SK-N-SH (cell line): ENCODE measurements at regions of chr13 and their contacts with region 1.

Region 1: DNA sequence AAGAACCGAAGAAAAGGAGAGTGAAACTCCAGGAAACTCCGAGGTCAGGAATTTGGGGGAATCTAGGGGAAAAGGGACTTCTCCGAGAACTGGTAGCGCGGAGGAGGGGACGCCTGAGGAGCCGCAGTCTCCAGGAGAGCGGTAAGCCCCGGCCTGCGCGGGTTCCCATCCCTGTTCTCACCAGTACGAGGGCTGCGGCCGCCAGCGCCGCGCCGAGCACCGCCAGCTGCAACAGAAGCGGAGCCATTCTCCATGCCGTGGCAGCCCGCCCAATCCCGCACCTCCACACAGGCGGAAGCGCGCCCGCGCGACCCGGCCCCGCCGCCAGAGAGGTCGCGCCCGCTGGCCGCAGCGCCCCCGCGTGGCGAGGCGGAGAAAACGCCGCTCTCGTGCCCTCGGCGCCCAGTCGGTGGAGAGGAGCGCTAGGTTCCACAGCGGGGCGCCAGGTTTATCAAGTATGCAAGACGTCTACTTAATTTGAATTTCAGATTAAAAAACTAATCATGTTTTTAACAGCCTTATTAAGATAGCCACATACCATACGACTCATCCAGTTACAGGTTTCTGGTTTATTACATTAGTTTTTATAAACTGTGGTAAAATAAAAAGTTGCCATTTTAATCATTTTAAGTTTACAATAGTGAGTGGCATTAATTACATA is at the start of gene ALG5:
- DNase-seq: peak; percentile 93
- H3K4me3 ChIP-seq: peak within 1 kb of the TSS; percentile 96 to 98
- H3K27ac ChIP-seq: peak within 1 kb of the TSS; percentile 91 to 98
- H3K4me1 ChIP-seq: peaks cover 9 to 13% of the 10 kb centered on the region in 2 experiments; a peak in 3 of 4 replicates
- H3K27me3 ChIP-seq: no peaks in the 10 kb centered on the region
- CTCF ChIP-seq: peak; percentile 95
- EP300 ChIP-seq: peak in 1 of 2 experiments; percentile 25; a peak in 1 of 4 replicates
- RAD21 ChIP-seq: peak; percentile 35; the same call in 1 of the 2 replicates
- polyA plus RNA-seq, gene ALG5: 24.2 and 30.4 TPM in 2 replicates

Region 2: DNA sequence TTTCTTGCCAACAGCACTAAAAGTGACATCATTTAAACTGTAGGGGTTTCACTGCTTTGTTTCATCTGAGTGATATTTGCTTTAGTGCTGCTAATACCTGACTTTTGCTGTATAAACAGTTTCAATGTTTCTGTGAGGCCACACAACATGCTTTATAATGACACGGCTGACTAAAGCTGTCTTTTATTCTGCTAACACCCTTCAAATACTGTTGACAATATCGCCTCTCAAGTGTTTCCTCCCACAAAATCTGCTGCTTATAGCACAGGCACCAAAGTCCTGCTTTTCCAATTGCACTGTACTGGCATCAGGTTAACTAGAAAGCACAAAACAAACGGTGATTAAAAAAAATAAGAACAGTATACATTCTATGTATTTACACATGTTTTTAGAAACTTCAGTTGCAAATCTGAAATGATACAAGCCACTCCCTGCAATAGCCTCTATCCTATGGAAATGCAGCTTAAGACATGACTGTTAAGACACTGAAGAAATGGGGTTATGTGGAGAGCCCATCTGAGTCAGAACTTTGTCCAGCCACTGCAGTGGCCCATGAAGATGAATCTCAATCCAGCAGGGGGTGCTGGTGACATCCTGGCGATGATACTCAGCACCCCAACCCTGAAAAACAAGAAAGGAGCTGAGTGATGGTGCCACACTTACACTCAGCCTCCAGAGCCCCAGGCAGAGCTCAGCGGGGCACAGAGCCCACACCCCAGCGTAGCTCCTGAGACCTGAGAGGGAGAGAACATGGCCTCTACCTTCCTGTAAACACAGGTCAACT is 150.8 kb before region 1 on chr13:
- CTCF ChIA-PET with region 1: interaction called, 11 read pairs
- POLR2A ChIA-PET with region 1: no interaction called
- DNase-seq: peak; percentile 17
- H3K4me3 ChIP-seq: no peak overlapping the region
- H3K27ac ChIP-seq: no peak overlapping the region; a peak in 1 of 4 replicates
- H3K4me1 ChIP-seq: peaks cover 0 to 2% of the 10 kb centered on the region in 2 experiments; a peak in 1 of 4 replicates
- H3K27me3 ChIP-seq: no peaks in the 10 kb centered on the region
- CTCF ChIP-seq: peak; percentile 51
- EP300 ChIP-seq: no peak
- RAD21 ChIP-seq: peak; percentile 36; the same call in 1 of the 2 replicates

Region 3: DNA sequence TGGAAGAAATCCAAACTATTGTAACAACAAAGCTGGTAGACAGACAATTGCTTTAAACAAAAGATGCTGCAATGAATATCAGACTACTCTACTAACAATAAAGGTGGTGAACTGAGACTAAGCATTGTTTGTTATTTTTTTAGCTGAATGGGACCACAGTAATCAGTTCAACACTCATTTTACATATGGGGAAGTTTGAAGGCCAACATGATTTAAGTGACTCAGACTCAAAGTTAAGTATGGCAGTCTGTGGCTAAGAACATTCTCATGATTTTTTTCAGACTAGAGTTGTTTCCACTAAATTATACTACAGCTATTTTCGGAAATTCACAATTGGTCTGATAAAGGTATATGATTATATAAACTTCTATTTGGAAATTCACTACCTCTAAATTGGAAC is 11.8 kb after region 1 on chr13:
- CTCF ChIA-PET with region 1: interaction called, 26 read pairs
- POLR2A ChIA-PET with region 1: interaction called, 5 read pairs
- DNase-seq: no peak
- H3K4me3 ChIP-seq: no peak overlapping the region
- H3K27ac ChIP-seq: no peak overlapping the region; a peak in 1 of 4 replicates
- H3K4me1 ChIP-seq: no peaks in the 10 kb centered on the region; a peak in 1 of 4 replicates
- H3K27me3 ChIP-seq: no peaks in the 10 kb centered on the region
- CTCF ChIP-seq: no peak
- EP300 ChIP-seq: no peak
- RAD21 ChIP-seq: no peak

Region 4: DNA sequence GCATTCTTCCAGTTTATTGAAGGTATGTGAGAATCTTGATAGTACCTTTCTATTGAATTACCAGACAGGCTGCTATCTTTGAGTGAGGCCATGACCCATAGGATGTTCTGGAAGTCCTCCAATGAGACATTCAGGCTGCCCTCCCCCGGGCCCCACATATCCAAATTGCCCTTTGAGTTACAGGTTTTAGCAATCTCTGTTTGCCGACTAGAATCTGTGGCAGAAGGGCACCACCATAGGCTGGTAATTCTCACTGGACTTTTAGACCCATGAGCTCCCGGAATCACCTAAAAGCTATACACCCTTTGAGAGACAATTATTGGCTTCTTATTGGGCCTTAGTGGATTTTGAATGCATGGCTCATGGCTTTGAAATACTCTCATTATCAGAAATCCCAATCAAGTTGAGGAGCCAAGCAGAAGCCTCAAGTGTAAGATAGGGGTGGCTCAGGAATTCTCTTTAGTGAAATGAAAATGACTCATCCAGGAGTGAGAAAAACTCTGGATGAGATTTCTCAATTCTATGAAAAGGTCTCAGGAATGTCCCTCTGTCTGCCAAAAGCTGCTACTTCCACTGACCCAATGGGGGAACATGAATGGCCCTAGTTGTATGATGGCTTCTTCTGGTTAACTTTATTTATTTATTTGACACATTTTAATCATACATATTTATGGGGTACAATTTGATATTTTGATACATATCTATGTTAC is 278.4 kb after region 1 on chr13:
- CTCF ChIA-PET with region 1: no interaction called
- POLR2A ChIA-PET with region 1: no interaction called
- DNase-seq: no peak
- H3K4me3 ChIP-seq: no peak overlapping the region
- H3K27ac ChIP-seq: no peak overlapping the region
- H3K4me1 ChIP-seq: no peaks in the 10 kb centered on the region
- H3K27me3 ChIP-seq: no peaks in the 10 kb centered on the region
- CTCF ChIP-seq: no peak
- EP300 ChIP-seq: no peak
- RAD21 ChIP-seq: no peak

Region 5: DNA sequence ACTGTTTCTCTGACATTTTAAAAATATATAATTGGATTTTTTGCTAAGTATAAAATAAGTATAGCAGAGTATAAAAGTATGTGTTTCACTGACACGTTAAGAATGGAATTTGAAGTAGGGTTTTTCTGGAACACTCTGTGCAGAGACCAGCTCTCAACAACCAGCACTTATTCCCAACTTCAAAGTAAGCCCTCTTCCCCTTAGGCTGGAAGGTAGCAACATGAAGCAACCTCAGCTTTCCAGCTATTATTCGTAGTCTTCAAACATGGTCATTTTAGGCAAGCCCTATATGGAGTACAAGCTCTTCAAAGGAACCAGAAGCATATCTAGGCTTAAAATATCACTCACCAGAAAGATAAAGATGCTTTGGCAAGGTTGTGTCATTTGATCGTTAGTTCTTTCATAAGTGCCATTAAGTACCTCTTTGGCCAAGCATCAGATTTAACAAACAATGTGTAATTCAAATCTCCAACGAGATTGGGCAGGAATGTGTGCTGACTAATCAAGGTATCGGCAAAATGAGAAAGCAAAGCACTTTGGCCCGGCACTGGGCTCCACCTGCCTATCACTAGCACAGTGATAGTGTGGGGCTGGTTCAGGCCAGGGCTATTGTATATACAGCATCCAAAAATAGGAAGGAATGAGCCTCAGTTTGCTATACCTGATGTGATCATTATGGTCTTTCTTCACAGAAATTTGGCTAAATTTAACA is 1591.8 kb after region 1 on chr13:
- CTCF ChIA-PET with region 1: no interaction called
- POLR2A ChIA-PET with region 1: no interaction called
- DNase-seq: no peak
- H3K4me3 ChIP-seq: no peak overlapping the region
- H3K27ac ChIP-seq: no peak overlapping the region
- H3K4me1 ChIP-seq: no peaks in the 10 kb centered on the region
- H3K27me3 ChIP-seq: no peaks in the 10 kb centered on the region
- CTCF ChIP-seq: no peak
- EP300 ChIP-seq: no peak
- RAD21 ChIP-seq: no peak